CD8-positive, alpha-beta memory T cell (primary cell): ENCODE measurements at regions of chr6 and their contacts with region 1.

Region 1: GRCh38 chr6:138115877-138116660 is 8.8 kb upstream of the PERP start:
- DNase-seq: peak; percentile 17 to 62 (median 43)
- H3K4me3 ChIP-seq: no peak overlapping the region
- H3K4me3 Mint-ChIP-seq: no peak overlapping the region
- H3K27ac ChIP-seq: no peak overlapping the region
- H3K27ac Mint-ChIP-seq: peak overlapping the region in 1 of 8 donors; percentile 20
- H3K4me1 ChIP-seq: peaks cover 4% of the 10 kb centered on the region
- H3K4me1 Mint-ChIP-seq: peaks cover 3 to 5% (median 4%) of the 10 kb centered on the region in 3 donors
- H3K27me3 ChIP-seq: no peaks in the 10 kb centered on the region
- H3K27me3 Mint-ChIP-seq: peaks cover 7 to 34% of the 10 kb centered on the region in 2 donors

Region 2: DNA sequence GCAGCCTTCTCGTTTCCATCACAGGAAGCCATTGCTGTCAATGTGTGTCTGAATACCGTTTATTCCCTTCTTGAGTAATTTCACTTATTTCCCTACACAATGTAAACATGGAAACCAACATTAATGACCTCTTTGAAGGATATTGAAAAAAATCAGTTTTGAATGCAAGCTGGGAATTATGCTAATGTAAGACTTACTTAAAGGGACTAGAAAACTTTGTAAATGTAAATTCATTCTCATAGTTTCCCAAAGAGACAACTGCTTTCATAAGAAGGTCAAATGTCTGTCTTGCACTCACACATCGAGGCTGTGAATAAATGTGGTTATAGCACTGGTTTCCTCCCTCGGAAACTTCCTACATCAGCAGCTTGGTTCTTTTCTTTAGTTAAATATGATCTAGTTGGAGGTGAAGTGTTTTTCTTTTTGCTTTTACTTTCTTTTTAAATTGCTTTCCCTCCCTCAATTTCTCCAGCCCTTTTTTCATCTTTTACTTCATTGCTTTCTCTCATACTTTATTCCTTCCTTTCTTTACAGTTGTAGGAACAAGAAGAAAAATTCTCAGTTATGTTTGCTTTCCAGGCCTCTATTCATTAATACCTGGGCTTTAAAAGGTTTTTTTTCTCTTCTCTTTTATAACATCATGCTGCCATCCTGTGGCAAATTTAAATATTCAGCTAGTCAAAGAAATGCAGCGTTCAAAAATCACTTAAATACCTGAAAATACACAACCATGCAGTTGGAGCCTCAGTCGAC is 140.7 kb before region 1 on chr6:
- CTCF ChIA-PET with region 1: no interaction called
- POLR2A ChIA-PET with region 1: no interaction called
- DNase-seq: peak in 4 of 5 donors; percentile 31 to 77 (median 54)
- H3K4me3 ChIP-seq: peak overlapping the region; percentile 33
- H3K4me3 Mint-ChIP-seq: peak overlapping the region; percentile 69 to 88 (median 81)
- H3K27ac ChIP-seq: peak overlapping the region; percentile 21
- H3K27ac Mint-ChIP-seq: peak overlapping the region; percentile 81 to 99 (median 97)
- H3K4me1 ChIP-seq: peaks cover 24% of the 10 kb centered on the region
- H3K4me1 Mint-ChIP-seq: peaks cover 65 to 75% (median 73%) of the 10 kb centered on the region in 3 donors
- H3K27me3 ChIP-seq: no peaks in the 10 kb centered on the region
- H3K27me3 Mint-ChIP-seq: no peaks in the 10 kb centered on the region

Region 3: DNA sequence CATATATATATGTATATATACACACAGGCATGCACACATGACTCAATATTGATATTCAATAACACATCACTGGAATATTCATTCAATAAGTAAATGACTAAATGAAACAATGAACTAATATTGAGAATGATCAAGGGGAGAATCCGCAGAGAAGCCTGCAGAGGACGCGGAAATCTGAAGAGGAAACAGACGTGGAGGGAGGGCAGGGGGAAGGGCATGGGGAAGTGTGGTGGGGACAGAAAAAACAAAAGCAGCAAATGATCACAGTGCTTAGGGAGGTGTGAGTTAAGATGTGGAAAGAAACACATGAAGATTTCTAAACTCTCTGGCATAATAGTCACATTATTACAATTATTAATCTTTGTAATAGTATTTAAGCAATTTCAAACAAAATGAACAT is 23.4 kb before region 1 on chr6:
- CTCF ChIA-PET with region 1: no interaction called
- POLR2A ChIA-PET with region 1: no interaction called
- DNase-seq: no peak
- H3K4me3 ChIP-seq: no peak overlapping the region
- H3K4me3 Mint-ChIP-seq: no peak overlapping the region
- H3K27ac ChIP-seq: no peak overlapping the region
- H3K27ac Mint-ChIP-seq: no peak overlapping the region
- H3K4me1 ChIP-seq: no peaks in the 10 kb centered on the region
- H3K4me1 Mint-ChIP-seq: no peaks in the 10 kb centered on the region
- H3K27me3 ChIP-seq: no peaks in the 10 kb centered on the region
- H3K27me3 Mint-ChIP-seq: peaks cover 0 to 1% of the 10 kb centered on the region in 2 donors

Region 4: DNA sequence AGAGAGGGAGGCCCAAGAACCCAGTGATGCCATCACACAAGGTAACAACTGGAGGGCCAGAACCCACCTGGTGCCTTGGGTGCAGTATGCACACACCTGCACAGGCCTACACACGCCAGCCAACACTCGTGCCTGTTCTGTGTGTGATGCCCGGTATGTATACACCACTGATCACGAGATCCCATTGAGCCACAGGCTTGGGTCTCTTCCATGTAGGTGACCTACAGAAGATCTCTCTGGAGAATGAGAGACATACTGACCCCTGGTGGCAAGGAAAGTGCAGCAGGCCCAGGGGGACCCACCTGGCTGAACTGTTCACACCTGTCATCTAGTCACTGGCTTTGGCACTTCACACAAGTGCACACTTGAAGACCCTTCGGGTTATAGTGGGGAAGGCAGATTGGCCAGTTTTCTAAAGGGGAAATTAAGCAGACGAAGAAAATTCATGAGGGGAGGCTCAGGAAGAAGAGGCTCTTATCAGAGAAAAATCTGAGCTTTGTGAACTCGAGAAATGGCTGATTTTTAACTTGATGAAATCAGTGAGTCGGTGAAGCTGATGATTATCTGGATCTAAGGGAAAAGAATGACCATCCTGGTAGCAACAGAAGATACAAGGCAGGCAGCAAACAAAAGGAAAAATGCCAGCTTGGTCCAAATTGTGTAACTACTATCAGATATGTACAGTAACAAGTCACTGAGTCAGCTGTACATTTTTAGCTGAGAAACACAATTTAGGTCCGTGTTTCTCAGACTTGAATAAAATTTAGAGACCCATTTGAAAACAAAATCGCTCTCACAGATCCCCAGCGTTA is 171.3 kb after region 1 on chr6:
- CTCF ChIA-PET with region 1: interaction called, 21 read pairs
- POLR2A ChIA-PET with region 1: no interaction called
- DNase-seq: peak; percentile 13 to 60 (median 30)
- H3K4me3 ChIP-seq: no peak overlapping the region
- H3K4me3 Mint-ChIP-seq: no peak overlapping the region
- H3K27ac ChIP-seq: no peak overlapping the region
- H3K27ac Mint-ChIP-seq: peak overlapping the region in 1 of 8 donors; percentile 44
- H3K4me1 ChIP-seq: no peaks in the 10 kb centered on the region
- H3K4me1 Mint-ChIP-seq: peaks cover 0 to 4% (median 0%) of the 10 kb centered on the region in 3 donors
- H3K27me3 ChIP-seq: no peaks in the 10 kb centered on the region
- H3K27me3 Mint-ChIP-seq: peaks cover 6 to 17% of the 10 kb centered on the region in 2 donors

Region 5: GRCh38 chr6:138509371-138509770 is 393.3 kb after region 1 on chr6:
- CTCF ChIA-PET with region 1: interaction called, 19 read pairs
- POLR2A ChIA-PET with region 1: no interaction called
- DNase-seq: peak in 3 of 5 donors; percentile 9 to 54 (median 36)
- H3K4me3 ChIP-seq: no peak overlapping the region
- H3K4me3 Mint-ChIP-seq: no peak overlapping the region
- H3K27ac ChIP-seq: no peak overlapping the region
- H3K27ac Mint-ChIP-seq: no peak overlapping the region
- H3K4me1 ChIP-seq: no peaks in the 10 kb centered on the region
- H3K4me1 Mint-ChIP-seq: peaks cover 2 to 6% (median 3%) of the 10 kb centered on the region in 3 donors
- H3K27me3 ChIP-seq: no peaks in the 10 kb centered on the region
- H3K27me3 Mint-ChIP-seq: peaks cover 1 to 8% of the 10 kb centered on the region in 2 donors

Region 6: GRCh38 chr6:138517635-138518034 is 401.6 kb after region 1 on chr6:
- CTCF ChIA-PET with region 1: interaction called, 28 read pairs
- POLR2A ChIA-PET with region 1: no interaction called
- DNase-seq: peak; percentile 27 to 69 (median 44)
- H3K4me3 ChIP-seq: no peak overlapping the region
- H3K4me3 Mint-ChIP-seq: no peak overlapping the region
- H3K27ac ChIP-seq: no peak overlapping the region
- H3K27ac Mint-ChIP-seq: peak overlapping the region in 1 of 8 donors; percentile 19
- H3K4me1 ChIP-seq: no peaks in the 10 kb centered on the region
- H3K4me1 Mint-ChIP-seq: peaks cover 13 to 16% (median 16%) of the 10 kb centered on the region in 3 donors
- H3K27me3 ChIP-seq: no peaks in the 10 kb centered on the region
- H3K27me3 Mint-ChIP-seq: peaks cover 4 to 25% of the 10 kb centered on the region in 2 donors